Prostate gland (tissue), 2 donors: ENCODE measurements at regions of chr3 and their contacts with region 1.

Region 1: GRCh38 chr3:39406368-39407258 is at the start of gene RPSA:
- DNase-seq: peak; percentile 96
- H3K4me3 ChIP-seq: peak within 1 kb of the TSS; percentile 58 to 60
- H3K27ac ChIP-seq: peak within 1 kb of the TSS; percentile 68 to 73
- H3K4me1 ChIP-seq: no peaks in the 10 kb centered on the region
- H3K27me3 ChIP-seq: no peaks in the 10 kb centered on the region
- CTCF ChIP-seq: peak in 3 of 4 experiments; percentile 31 to 44 (median 33)
- POLR2A ChIP-seq: peak; percentile 78
- total RNA-seq, gene RPSA: 732 to 1,080 TPM

Region 2: GRCh38 chr3:39107388-39108199 is 299.0 kb before region 1 on chr3 and contains the starts of genes GORASP1 and TTC21A:
- intact Hi-C with region 1: loop called (anchors 10 kb)
- DNase-seq: peak; percentile 90
- H3K4me3 ChIP-seq: peak within 1 kb of the TSS; percentile 96 to 99
- H3K27ac ChIP-seq: peak within 1 kb of the TSS; percentile 87 to 94
- H3K4me1 ChIP-seq: peaks cover 7% of the 10 kb centered on the region
- H3K27me3 ChIP-seq: no peaks in the 10 kb centered on the region
- CTCF ChIP-seq: peak in 1 of 4 experiments; percentile 14
- POLR2A ChIP-seq: peak; percentile 79
- total RNA-seq, gene GORASP1: 76.5 to 104 TPM
- total RNA-seq, gene TTC21A: 9.0 to 23.2 TPM

Region 3: DNA sequence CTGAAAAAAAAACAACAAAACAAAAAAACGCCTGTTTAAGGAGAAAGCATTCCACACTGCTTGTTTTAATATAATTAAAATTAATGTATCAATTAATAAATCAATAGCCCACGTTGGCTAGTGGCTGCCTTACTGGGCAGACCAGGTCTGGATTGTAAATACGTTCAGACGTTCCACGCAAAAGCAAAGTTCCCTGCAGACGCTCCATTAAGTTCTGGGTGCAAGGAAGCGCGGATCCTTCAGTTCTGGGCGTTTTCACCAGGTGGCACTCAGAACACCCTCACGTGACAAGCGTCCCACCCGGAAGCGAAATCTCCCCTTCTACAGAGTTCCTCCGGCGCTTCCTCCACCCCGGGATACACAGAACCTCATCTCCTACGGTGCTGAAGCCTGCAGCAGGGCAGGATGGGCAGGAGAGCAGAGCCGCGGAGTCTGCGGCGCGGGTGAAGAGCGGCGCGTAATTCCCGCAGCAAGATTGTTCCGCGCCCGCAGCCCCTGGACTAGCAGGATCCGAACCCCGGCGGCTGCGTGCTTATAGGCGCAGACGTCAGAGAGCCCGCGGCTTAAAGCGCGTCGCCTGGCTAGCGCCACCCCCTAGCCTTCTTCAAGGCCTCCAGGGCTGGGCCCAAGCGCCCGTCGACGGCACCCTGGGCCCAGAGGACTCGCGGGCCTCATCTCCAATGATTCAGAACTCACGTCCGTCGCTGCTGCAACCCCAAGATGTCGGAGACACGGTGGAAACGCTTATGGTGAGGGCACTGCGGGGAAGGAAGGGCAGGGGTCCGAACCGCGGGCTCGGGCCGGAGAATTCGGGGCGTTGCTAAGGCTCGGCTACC is 23.4 kb before region 1 on chr3 and contains the start of gene SLC25A38:
- intact Hi-C with region 1: loop called (anchors 1 kb)
- DNase-seq: peak; percentile 75
- H3K4me3 ChIP-seq: peak within 1 kb of the TSS; percentile 58 to 69
- H3K27ac ChIP-seq: peak within 1 kb of the TSS; percentile 91 to 95
- H3K4me1 ChIP-seq: no peaks in the 10 kb centered on the region
- H3K27me3 ChIP-seq: no peaks in the 10 kb centered on the region
- CTCF ChIP-seq: peak in 2 of 4 experiments; percentile 37 to 51
- POLR2A ChIP-seq: peak; percentile 49
- total RNA-seq, gene SLC25A38: 36.7 to 72.4 TPM

Region 4: DNA sequence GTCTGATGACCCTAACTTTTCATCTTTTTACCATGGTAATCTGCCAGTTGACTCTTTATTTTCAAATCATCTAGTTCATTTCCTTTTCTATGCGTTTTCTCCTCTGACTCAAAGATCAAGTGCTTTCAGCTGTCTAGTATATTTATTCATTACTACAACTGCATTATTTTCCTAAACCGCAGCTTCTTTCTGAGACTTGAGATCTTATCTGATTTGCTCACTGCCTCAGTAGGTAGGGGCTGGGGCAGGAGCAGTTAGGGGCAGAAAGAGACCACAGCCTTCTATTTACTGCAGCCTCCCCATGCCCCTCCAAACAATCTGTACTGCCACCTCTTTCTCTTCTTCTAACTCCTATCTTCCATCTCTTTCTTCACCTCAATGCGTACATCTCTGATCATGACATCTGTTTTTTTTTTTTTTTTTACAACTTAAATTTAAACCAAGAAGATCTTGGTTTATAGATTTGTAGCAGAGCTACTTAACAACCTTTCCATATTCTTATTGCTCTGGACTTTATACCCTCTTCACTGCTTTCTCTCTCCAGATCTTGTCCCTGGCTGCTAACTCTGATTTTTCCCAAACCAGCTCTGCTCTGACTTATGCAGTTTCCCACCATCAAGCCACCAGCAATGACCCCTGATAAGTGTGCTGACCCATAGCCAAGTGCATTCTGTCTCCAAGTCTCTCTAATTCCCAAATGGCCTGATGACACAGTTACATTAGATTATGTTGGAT is 113.1 kb after region 1 on chr3:
- intact Hi-C with region 1: no loop called
- DNase-seq: no peak
- H3K4me3 ChIP-seq: no peak overlapping the region
- H3K27ac ChIP-seq: no peak overlapping the region
- H3K4me1 ChIP-seq: no peaks in the 10 kb centered on the region
- H3K27me3 ChIP-seq: no peaks in the 10 kb centered on the region
- CTCF ChIP-seq: no peak
- POLR2A ChIP-seq: no peak

Region 5: GRCh38 chr3:40309418-40309924 is 902.9 kb after region 1 on chr3 and contains the start of gene EIF1B:
- intact Hi-C with region 1: loop called (anchors 5 kb)
- DNase-seq: peak; percentile 98
- H3K4me3 ChIP-seq: peak within 1 kb of the TSS; percentile 75 to 76
- H3K27ac ChIP-seq: peak within 1 kb of the TSS; percentile 82 to 85
- H3K4me1 ChIP-seq: peaks cover 6% of the 10 kb centered on the region
- H3K27me3 ChIP-seq: no peaks in the 10 kb centered on the region
- CTCF ChIP-seq: peak; percentile 81 to 98 (median 98)
- POLR2A ChIP-seq: peak; percentile 96
- total RNA-seq, gene EIF1B: 26.5 to 29.4 TPM